Cardiac septum (tissue), 1 donor: ENCODE measurements at regions of chr1 and their contacts with region 1.

Region 1: GRCh38 chr1:1430114-1430982 is 5.1 kb upstream of the VWA1 start:
- DNase-seq: peak; percentile 83

Region 2: DNA sequence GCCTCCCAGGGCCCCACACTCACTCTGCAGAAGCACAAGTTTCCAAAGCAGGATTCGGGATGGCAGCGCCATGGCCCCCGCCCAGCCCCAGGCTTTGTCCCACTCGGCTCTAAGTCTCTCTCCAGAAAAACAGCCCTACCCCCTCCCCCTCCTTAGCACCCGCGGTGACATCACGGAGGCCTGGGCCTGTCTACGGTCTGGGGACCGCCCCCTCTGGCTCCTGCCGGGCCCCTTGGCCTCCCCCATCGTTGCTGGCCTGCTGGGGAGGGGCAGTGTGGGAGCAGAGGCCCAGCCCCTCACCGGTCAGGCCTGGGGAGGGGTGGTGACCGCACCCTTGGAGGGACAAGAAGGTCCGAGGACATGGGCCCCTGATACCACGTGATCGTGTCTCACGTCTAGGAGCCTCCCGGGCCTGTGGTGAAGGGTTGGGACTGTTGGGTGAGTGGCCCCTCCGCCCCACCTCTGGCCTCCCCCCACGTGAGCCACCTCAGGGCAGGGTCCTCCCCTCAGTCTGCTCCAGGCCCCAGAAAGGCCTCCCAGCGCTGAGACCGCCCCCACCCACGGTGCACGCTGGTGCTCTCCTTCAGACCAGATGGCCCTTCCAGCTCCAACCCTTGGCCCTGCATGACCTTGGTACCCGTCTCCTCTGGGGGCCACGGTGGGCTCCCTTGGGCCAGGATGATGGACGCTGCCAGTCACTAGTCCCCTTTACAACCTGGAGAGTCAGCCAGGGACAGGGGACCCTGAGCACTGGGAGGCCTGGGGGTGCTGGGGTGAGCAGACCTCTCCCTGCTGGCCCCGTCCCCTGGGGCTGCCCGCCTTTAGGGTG is 71.7 kb before region 1 on chr1 and contains the start of gene MXRA8:
- intact Hi-C with region 1: loop called (anchors 5 kb)
- DNase-seq: no peak
- total RNA-seq, gene MXRA8: 30.5 TPM

Region 3: DNA sequence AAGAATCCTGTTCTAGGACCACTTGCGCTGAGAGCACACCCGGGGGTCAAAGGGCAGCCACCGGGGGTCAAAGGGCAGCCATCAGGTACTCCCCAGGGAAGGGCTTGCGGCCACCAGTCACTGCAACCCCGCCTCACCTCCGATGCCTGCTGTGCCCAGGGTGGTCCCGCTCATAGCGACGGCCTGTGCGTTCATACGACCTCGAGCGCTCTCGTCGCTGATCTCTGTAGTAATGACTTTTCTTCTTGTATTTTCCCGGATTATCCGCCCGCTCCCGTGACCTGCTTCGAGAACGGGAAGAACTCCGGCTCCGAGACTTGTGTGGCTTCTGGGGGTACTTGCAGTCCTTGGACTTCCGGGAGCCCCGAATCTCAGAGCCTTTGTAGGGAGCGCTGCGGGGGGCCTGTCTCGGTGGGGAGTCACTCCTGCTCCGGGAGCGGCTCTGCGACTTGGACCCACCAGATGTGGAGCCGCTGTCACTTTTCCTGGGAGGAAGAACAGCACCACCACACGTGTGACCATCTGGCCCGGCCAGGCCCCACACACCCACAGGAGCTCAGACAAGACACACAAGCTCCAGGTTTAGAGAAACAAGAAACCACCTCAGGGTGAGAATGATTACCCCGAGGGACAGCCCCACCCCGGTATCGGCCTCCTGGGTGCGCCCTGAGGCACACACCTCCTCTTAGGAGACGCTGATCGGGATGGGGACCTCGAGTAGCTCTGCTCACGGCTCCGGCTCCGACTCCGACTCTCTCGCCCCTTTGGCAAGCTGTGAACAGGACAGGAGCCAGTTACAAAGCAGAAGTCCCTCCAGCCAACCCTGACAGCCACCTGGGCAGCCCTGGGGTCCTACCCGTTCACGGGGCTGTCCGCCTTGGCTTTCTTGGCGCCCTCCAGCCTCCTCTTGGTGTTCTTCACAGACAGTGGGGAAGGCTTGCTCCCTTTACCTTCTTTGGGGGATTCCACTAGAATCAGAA is 43.0 kb before region 1 on chr1:
- intact Hi-C with region 1: no loop called
- DNase-seq: no peak

Region 4: GRCh38 chr1:2044510-2045319 is 614.4 kb after region 1 on chr1:
- intact Hi-C with region 1: no loop called
- DNase-seq: peak; percentile 87